HCT116 (cell line): ENCODE measurements at regions of chr16 and their contacts with region 1.

Region 1: GRCh38 chr16:10509534-10510025 is 70.8 kb downstream of the EMP2 start:
- DNase-seq: peak; percentile 71
- ATAC-seq: peak; percentile 99
- H3K4me3 ChIP-seq: no peak overlapping the region
- H3K27ac ChIP-seq: no peak overlapping the region
- H3K4me1 ChIP-seq: no peaks in the 10 kb centered on the region
- H3K27me3 ChIP-seq: no peaks in the 10 kb centered on the region
- CTCF ChIP-seq: peak; percentile 75 to 88 (median 78)
- POLR2A ChIP-seq: no peak
- RAD21 ChIP-seq: peak; percentile 95

Region 2: GRCh38 chr16:9159839-9160550 is 1349.6 kb before region 1 on chr16:
- CTCF ChIA-PET with region 1: no interaction called
- POLR2A ChIA-PET with region 1: no interaction called
- RAD21 ChIA-PET with region 1: no interaction called
- intact Hi-C with region 1: loop called (anchors 10 kb)
- DNase-seq: peak; percentile 75
- ATAC-seq: peak; percentile 98
- H3K4me3 ChIP-seq: no peak overlapping the region
- H3K27ac ChIP-seq: no peak overlapping the region
- H3K4me1 ChIP-seq: peaks cover 0 to 12% of the 10 kb centered on the region in 2 experiments; a peak in 1 of 4 replicates
- H3K27me3 ChIP-seq: no peaks in the 10 kb centered on the region
- CTCF ChIP-seq: peak; percentile 69 to 88 (median 86)
- POLR2A ChIP-seq: no peak
- RAD21 ChIP-seq: peak; percentile 91

Region 3: DNA sequence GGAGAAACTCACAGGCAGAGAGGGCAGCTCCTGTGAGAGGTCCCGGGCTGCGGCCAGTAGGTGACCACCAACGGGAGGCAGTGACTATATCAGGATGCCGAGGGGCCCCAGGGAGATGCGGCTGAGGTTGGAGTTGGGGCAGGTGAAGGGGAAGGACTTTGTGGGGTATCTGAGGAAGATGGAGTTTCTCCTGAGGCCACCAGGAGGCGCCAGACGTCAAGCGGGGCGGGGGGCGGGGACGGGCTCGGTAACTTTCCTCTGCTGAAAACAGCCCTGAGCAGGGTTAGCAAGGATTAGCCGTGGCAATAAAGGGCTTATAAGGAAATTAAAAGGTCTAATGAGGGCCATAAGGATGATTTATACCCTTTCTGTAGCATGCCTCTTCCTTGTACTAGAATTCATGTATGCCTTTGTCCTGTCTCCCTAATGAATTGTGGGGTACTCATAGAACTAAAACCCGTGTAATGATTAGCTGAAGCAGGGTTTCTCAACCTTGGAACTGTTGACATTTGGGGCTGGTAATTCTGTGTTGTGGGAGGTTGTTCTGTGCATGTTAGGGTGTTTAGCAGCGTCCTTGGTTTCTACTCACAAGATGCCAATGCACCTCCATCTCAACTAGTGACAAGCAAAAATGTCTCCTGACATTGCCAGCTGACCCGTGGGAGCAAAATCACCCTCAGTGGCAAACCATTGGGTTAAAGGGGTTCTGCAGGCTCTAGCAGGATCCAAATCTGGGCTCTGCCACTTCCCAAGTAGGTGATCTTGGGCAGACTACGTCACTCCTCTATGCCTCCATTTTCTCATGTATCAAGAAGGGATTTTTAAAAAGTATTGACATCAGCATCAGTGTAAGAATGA is 252.6 kb before region 1 on chr16:
- CTCF ChIA-PET with region 1: interaction called, 20 read pairs
- POLR2A ChIA-PET with region 1: no interaction called
- RAD21 ChIA-PET with region 1: interaction called, 4 to 6 read pairs
- intact Hi-C with region 1: loop called (anchors 1 kb)
- DNase-seq: no peak
- ATAC-seq: peak; percentile 92
- H3K4me3 ChIP-seq: no peak overlapping the region
- H3K27ac ChIP-seq: no peak overlapping the region
- H3K4me1 ChIP-seq: peaks cover 0 to 4% of the 10 kb centered on the region in 2 experiments; a peak in 1 of 4 replicates
- H3K27me3 ChIP-seq: no peaks in the 10 kb centered on the region
- CTCF ChIP-seq: peak; percentile 16 to 64 (median 62); a peak in 5 of 6 replicates
- POLR2A ChIP-seq: no peak
- RAD21 ChIP-seq: peak; percentile 48

Region 4: DNA sequence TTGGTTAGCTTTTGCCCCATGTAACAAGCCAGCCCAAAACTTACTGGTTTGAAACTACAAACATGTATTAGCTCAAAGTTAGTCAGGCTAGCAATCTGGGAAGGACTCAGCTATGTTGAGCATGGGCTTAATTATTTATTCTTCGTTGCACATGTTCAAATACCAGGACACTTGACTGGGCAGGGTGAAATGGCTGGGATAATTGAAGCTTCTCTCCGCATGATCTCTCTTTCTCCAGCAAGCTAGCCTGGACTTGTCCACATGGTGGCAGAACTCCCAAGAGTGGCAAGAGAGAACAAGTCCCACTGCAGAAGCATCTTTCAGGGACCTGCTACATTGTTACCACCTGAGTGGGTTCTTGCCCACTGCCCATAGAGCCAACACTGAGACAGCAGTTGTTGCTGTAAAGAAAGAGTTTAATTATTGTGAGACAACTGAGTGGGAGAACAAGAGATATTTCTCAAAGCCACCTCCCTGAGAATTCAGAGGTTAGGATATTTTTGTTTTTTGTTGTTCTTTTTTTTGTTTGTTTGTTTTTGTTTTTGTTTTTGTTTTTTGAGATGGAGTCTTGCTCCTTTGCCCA is 140.5 kb before region 1 on chr16:
- CTCF ChIA-PET with region 1: interaction called, 10 read pairs
- POLR2A ChIA-PET with region 1: no interaction called
- RAD21 ChIA-PET with region 1: no interaction called
- intact Hi-C with region 1: loop called (anchors 2 kb)
- DNase-seq: no peak
- ATAC-seq: peak; percentile 69; the same call in 1 of the 2 replicates
- H3K4me3 ChIP-seq: no peak overlapping the region
- H3K27ac ChIP-seq: no peak overlapping the region
- H3K4me1 ChIP-seq: no peaks in the 10 kb centered on the region
- H3K27me3 ChIP-seq: no peaks in the 10 kb centered on the region
- CTCF ChIP-seq: peak in 2 of 3 experiments; percentile 40 to 44; a peak in 3 of 6 replicates
- POLR2A ChIP-seq: no peak
- RAD21 ChIP-seq: peak; percentile 27

Region 5: GRCh38 chr16:10485698-10486382 is 23.7 kb before region 1 on chr16:
- CTCF ChIA-PET with region 1: no interaction called
- POLR2A ChIA-PET with region 1: no interaction called
- RAD21 ChIA-PET with region 1: no interaction called
- intact Hi-C with region 1: no loop called
- DNase-seq: no peak
- ATAC-seq: 0 out of 2 replicates have a peak, but pooled peaks have one; percentile 25
- H3K4me3 ChIP-seq: no peak overlapping the region
- H3K27ac ChIP-seq: no peak overlapping the region
- H3K4me1 ChIP-seq: no peaks in the 10 kb centered on the region
- H3K27me3 ChIP-seq: no peaks in the 10 kb centered on the region
- CTCF ChIP-seq: no peak
- POLR2A ChIP-seq: no peak
- RAD21 ChIP-seq: no peak

Region 6: GRCh38 chr16:11597239-11598101 is 1087.9 kb after region 1 on chr16:
- CTCF ChIA-PET with region 1: no interaction called
- POLR2A ChIA-PET with region 1: no interaction called
- RAD21 ChIA-PET with region 1: no interaction called
- intact Hi-C with region 1: no loop called
- DNase-seq: no peak
- ATAC-seq: peak; percentile 81
- H3K4me3 ChIP-seq: no peak overlapping the region
- H3K27ac ChIP-seq: no peak overlapping the region
- H3K4me1 ChIP-seq: peaks cover 11 to 16% of the 10 kb centered on the region in 2 experiments
- H3K27me3 ChIP-seq: no peaks in the 10 kb centered on the region
- CTCF ChIP-seq: no peak
- POLR2A ChIP-seq: no peak
- RAD21 ChIP-seq: no peak